ENCODE measurements at regions of chr16 and their contacts with region 1.

Region 1: DNA sequence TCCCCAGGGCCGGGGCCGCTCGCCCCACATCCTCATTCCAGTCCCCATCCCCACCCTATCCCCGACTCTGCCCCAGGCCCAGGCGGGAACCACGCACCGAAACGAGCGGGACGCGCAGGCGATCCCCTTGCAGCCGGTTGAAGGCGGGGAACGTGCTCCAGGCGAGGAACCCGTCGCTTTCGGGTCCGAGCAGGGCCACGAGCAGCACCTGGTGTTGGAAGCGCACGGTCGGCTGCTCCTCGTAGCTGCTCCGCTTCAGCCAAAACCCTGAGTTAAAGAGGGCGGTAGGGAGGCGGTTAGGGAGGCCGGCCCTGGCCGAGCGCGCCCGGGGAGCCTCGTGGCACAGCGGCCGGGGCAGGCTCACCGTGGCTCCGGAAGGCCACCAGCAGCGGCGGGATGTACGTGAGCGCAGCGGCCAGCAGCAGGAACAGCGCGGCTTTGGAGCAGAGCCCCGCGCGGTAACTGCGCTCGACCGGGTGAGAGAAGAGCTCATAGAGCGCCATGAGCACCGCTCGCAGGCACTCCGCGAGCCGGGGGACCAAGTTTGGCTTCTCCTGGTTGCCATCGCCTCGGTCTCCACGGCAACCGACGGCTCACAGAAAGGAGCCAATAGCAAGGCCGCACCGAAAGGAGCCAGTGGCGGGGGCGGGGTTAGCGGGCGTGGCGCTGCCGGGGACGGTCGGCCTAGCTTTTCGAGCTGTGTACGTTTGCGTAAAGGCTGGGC is at the start of gene TMEM231:
- DNase-seq: peak; percentile 91

Region 2: GRCh38 chr16:75519881-75520280 is 36.0 kb before region 1 on chr16:
- CTCF ChIA-PET with region 1: interaction called, 5 read pairs
- POLR2A ChIA-PET with region 1: interaction called, 10 read pairs
- DNase-seq: no peak

Region 3: GRCh38 chr16:75566040-75566810 is 10.4 kb after region 1 on chr16 and contains the start of gene GABARAPL2:
- CTCF ChIA-PET with region 1: no interaction called
- POLR2A ChIA-PET with region 1: interaction called, 22 read pairs
- DNase-seq: peak; percentile 92

Region 4: GRCh38 chr16:75622761-75623605 is 67.1 kb after region 1 on chr16 and contains the start of gene ADAT1:
- CTCF ChIA-PET with region 1: no interaction called
- POLR2A ChIA-PET with region 1: interaction called, 10 read pairs
- DNase-seq: peak; percentile 96

Region 5: GRCh38 chr16:75647492-75648264 is 91.8 kb after region 1 on chr16 and contains the starts of genes KARS1 and TERF2IP:
- CTCF ChIA-PET with region 1: no interaction called
- POLR2A ChIA-PET with region 1: interaction called, 11 read pairs
- DNase-seq: peak; percentile 93

Region 6: GRCh38 chr16:75679366-75679765 is 123.5 kb after region 1 on chr16:
- CTCF ChIA-PET with region 1: no interaction called
- POLR2A ChIA-PET with region 1: no interaction called
- DNase-seq: no peak